Dorsolateral prefrontal cortex (tissue), 120 donors: ENCODE measurements at regions of chr15 and their contacts with region 1.

Region 1: DNA sequence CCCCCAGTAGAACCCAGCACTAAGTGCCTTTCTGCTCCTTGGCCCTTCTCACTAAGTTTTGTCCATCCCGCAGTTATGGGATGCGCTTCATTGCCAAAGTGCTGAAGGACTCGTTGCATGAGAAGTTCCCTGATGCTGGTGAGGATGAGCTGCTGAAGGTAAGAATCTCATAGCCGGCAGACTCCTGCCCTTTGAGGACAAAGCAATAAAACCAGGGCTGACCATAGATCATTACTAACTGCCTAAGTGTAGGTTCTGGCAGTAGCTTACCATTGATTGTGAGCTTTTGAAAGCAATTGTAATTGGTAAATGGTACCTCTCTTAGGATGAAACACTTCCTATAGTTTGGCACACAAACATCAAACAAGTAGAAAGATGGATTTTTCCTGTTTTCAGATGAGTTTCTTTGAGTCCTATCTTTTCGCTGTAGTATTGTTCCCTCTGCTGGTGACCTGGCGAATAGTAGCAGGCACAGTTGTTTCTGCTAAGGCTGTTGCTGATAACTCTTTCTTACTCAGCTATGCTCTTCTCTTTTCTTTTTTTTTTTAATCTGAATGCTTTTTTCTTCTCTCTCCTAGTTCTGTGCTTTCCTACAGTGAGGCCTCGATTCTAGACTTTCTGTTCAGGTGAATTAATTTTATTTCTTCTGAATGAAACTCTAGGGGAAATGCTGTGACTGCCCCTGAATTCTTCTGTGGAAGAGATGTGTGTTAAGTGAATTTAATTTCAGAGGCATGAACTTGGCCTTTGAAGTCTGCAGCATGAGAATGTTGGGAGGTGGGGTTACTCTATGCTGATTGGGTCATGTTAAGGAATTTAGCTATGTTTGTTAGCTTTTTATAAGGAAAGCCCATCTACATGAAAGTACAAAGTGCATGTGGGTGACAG is 47.4 kb upstream of the CRTC3 start:
- DNase-seq: peak in 7 of 10 donors; percentile 9 to 88 (median 68)
- H3K4me3 ChIP-seq: no peak overlapping the region
- H3K27ac ChIP-seq: peak overlapping the region in 58 of 59 donors; percentile 5 to 99 (median 84)
- H3K27me3 ChIP-seq: no peaks in the 10 kb centered on the region
- CTCF ChIP-seq: peak; percentile 75 to 98 (median 92)

Region 2: GRCh38 chr15:90362936-90363212 is 119.5 kb before region 1 on chr15:
- intact Hi-C with region 1: loop called (anchors 1 to 5 kb)
- DNase-seq: no peak
- H3K4me3 ChIP-seq: no peak overlapping the region
- H3K27ac ChIP-seq: peak overlapping the region in 50 of 59 donors; percentile 5 to 94 (median 80)
- H3K27me3 ChIP-seq: no peaks in the 10 kb centered on the region
- CTCF ChIP-seq: no peak

Region 3: GRCh38 chr15:90387537-90388461 is 94.6 kb before region 1 on chr15 and contains the start of gene IQGAP1:
- intact Hi-C with region 1: loop called in 1 of 2 experiments (anchors 5 kb)
- DNase-seq: peak; percentile 87 to 98 (median 93)
- H3K4me3 ChIP-seq: peak within 1 kb of the TSS; percentile 65 to 97 (median 89)
- H3K27ac ChIP-seq: peak within 1 kb of the TSS; percentile 42 to 97 (median 92)
- H3K27me3 ChIP-seq: no peaks in the 10 kb centered on the region
- CTCF ChIP-seq: peak in 4 of 56 donors; percentile 4 to 24 (median 12)
- total RNA-seq, gene IQGAP1: 41.1 to 286 (median 89.8) TPM

Region 4: GRCh38 chr15:90598031-90598577 is 115.7 kb after region 1 on chr15:
- intact Hi-C with region 1: loop called (anchors 5 kb)
- DNase-seq: peak in 6 of 10 donors; percentile 45 to 78 (median 58)
- H3K4me3 ChIP-seq: no peak overlapping the region
- H3K27ac ChIP-seq: peak overlapping the region; percentile 20 to 93 (median 84)
- H3K27me3 ChIP-seq: no peaks in the 10 kb centered on the region
- CTCF ChIP-seq: peak in 51 of 56 donors; percentile 12 to 64 (median 40)